HepG2 (cell line): ENCODE measurements at regions of chr5 and their contacts with region 1.

Region 1: DNA sequence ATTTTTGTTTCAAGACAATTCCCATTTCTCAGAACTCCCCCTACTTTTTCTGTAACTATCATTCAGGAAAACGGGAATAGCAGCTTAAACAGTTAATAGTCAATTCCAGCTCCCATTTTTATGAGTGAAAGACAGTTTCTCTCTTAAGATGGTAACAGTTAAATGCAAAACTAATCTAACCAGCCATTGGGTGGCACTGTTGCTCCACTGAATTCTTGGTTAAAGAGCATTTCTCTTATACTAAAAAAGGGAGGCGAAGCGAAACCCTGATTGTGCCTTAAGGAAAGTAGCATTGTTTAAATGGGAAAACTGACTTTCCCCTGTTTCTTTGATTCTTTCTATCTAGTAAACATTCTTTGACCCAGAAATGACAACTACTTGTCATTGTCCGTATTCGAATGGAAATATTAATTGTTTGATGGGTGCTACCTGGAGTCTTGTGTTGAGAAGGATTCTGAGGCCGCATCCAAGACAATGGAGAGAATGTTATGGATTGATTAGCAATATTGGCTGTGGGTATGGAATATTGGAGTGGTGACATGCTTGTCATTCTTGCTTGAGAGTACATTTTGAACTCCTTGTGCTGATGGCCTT is 507.8 kb downstream of the MAT2B start:
- DNase-seq: peak; percentile 45
- ATAC-seq: peak; percentile 68; the same call in 2 of the 3 replicates
- H3K4me3 ChIP-seq: no peak overlapping the region
- H3K27ac ChIP-seq: no peak overlapping the region
- H3K4me1 ChIP-seq: no peaks in the 10 kb centered on the region
- H3K27me3 ChIP-seq: no peaks in the 10 kb centered on the region
- CTCF ChIP-seq: peak; percentile 73
- EP300 ChIP-seq: no peak
- POLR2A ChIP-seq: no peak
- RAD21 ChIP-seq: 0 out of 2 replicates have a peak, but pooled peaks have one; percentile 29

Region 2: GRCh38 chr5:163695830-163696578 is 317.2 kb before region 1 on chr5:
- CTCF ChIA-PET with region 1: no interaction called
- POLR2A ChIA-PET with region 1: no interaction called
- in situ Hi-C with region 1: no loop called
- intact Hi-C with region 1: loop called (anchors 1 kb)
- DNase-seq: peak; percentile 38
- ATAC-seq: peak; percentile 100
- H3K4me3 ChIP-seq: no peak overlapping the region
- H3K27ac ChIP-seq: no peak overlapping the region
- H3K4me1 ChIP-seq: no peaks in the 10 kb centered on the region
- H3K27me3 ChIP-seq: no peaks in the 10 kb centered on the region; a peak in 1 of 5 replicates
- CTCF ChIP-seq: peak; percentile 80
- EP300 ChIP-seq: no peak
- POLR2A ChIP-seq: no peak
- RAD21 ChIP-seq: no peak

Region 3: DNA sequence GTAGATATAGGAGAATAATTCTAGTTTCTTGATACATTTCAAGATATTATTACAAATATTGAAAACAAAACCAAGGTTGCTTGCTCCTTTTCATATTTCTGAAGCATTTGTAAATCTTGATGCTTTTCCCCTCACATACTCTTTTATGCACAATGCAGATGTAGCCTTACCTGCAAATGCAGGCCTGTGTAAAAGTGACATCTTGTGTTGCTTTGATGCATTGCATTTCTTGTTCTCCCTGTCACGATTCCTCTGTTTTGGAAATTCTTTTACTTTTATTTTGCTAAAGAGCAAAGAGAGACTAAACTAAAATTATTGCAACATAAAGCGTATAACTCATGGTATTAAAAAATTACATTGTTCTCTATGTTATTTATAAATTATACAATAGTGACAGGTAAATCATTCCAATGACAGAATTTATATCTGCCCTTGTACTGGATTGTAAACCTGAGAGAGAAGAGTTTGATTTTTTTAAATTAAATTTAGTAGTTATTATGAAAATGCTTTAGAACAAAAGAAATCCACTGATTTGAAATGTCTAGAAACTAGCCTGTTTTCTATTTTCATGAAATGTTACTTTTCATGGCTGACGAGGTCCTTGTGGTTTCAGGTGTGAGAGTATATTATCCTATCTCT is 462.3 kb after region 1 on chr5:
- CTCF ChIA-PET with region 1: interaction called, 5 read pairs
- POLR2A ChIA-PET with region 1: no interaction called
- in situ Hi-C with region 1: no loop called
- intact Hi-C with region 1: loop called (anchors 1 kb)
- DNase-seq: peak; percentile 10
- ATAC-seq: no peak
- H3K4me3 ChIP-seq: no peak overlapping the region
- H3K27ac ChIP-seq: no peak overlapping the region
- H3K4me1 ChIP-seq: no peaks in the 10 kb centered on the region
- H3K27me3 ChIP-seq: no peaks in the 10 kb centered on the region
- CTCF ChIP-seq: peak; percentile 39
- EP300 ChIP-seq: no peak
- POLR2A ChIP-seq: no peak
- RAD21 ChIP-seq: no peak

Region 4: GRCh38 chr5:164672931-164673694 is 659.9 kb after region 1 on chr5:
- CTCF ChIA-PET with region 1: no interaction called
- POLR2A ChIA-PET with region 1: no interaction called
- in situ Hi-C with region 1: no loop called
- intact Hi-C with region 1: loop called (anchors 2 kb)
- DNase-seq: no peak
- ATAC-seq: no peak
- H3K4me3 ChIP-seq: no peak overlapping the region
- H3K27ac ChIP-seq: no peak overlapping the region
- H3K4me1 ChIP-seq: no peaks in the 10 kb centered on the region
- H3K27me3 ChIP-seq: no peaks in the 10 kb centered on the region
- CTCF ChIP-seq: no peak
- EP300 ChIP-seq: no peak
- POLR2A ChIP-seq: no peak
- RAD21 ChIP-seq: no peak

Region 5: DNA sequence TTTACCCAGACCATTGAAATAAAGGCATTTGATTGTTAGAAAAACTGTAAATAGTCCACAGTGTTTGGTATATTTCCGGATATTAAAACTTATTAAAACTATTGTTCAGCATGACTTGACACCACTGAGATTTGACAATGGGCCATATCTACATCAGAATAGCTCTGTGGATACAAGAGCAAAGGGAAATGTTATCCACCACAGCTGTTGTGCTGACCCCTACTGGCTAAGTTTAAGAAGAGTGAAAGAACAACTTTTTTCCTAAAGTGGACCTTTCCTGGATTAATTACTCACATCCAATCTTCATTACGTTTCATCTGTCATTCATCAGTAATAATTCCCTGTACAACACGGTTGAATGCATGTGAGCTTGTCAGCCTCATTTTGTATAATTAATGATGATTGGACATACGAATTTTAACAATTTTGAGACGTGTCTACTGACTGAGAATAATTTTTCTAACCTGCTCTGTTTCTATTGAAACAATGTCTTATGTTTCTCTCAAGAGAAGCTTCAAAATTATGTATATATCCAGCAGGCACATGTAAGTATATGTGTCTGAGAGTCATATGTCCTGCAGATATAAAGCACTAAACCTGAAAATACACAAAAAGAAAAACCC is 1444.8 kb after region 1 on chr5:
- CTCF ChIA-PET with region 1: no interaction called
- POLR2A ChIA-PET with region 1: no interaction called
- in situ Hi-C with region 1: no loop called
- intact Hi-C with region 1: loop called (anchors 5 kb)
- DNase-seq: no peak
- ATAC-seq: no peak
- H3K4me3 ChIP-seq: no peak overlapping the region
- H3K27ac ChIP-seq: no peak overlapping the region
- H3K4me1 ChIP-seq: no peaks in the 10 kb centered on the region
- H3K27me3 ChIP-seq: no peaks in the 10 kb centered on the region
- CTCF ChIP-seq: no peak
- EP300 ChIP-seq: no peak
- POLR2A ChIP-seq: no peak
- RAD21 ChIP-seq: no peak